ENCODE measurements at regions of chr10 and their contacts with region 1.

Region 1: DNA sequence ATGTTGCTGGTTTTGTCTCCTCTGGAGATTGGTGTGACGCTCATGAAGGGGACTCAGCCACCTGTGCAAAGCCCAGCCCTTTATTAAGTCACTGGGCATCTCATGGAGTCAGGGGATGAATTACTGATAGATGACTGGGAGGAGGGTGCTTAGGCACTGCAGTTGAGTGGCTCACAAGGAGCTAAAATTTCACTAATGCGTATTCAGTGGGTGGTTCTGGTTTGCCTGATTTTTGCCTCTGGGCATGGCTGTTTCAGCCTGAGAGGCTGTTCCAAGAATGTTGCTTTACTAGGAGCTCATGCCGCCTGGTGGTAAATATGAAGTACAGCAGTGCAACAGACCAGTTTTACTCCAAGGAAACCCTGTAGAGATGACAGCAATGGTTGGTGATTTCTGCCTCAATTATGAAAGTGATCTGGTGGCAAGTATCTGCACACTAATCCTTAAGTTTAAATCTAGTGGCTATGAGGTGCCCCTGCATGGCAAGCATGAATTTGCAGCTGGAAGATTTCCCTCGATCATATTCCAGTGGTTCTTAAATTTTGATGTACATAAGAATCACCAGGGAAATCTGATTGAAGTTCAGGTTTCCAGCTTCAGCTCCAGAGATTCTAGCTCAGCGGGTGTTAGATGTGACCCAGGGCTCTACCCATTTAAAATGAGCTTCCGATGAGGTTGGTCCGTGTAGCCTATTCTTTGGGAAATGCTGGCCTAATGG is 19.9 kb downstream of the ACTA2 start:
- DNase-seq: peak in 3 of 6 donors; percentile 28 to 48 (median 31)
- ATAC-seq: peak; percentile 46 to 87 (median 80)
- H3K4me3 ChIP-seq: no peak overlapping the region
- H3K27ac ChIP-seq: no peak overlapping the region
- H3K4me1 ChIP-seq: peaks cover 0 to 5% (median 4%) of the 10 kb centered on the region in 3 donors
- H3K27me3 ChIP-seq: no peaks in the 10 kb centered on the region
- CTCF ChIP-seq: peak; percentile 54 to 80 (median 68)

Region 2: DNA sequence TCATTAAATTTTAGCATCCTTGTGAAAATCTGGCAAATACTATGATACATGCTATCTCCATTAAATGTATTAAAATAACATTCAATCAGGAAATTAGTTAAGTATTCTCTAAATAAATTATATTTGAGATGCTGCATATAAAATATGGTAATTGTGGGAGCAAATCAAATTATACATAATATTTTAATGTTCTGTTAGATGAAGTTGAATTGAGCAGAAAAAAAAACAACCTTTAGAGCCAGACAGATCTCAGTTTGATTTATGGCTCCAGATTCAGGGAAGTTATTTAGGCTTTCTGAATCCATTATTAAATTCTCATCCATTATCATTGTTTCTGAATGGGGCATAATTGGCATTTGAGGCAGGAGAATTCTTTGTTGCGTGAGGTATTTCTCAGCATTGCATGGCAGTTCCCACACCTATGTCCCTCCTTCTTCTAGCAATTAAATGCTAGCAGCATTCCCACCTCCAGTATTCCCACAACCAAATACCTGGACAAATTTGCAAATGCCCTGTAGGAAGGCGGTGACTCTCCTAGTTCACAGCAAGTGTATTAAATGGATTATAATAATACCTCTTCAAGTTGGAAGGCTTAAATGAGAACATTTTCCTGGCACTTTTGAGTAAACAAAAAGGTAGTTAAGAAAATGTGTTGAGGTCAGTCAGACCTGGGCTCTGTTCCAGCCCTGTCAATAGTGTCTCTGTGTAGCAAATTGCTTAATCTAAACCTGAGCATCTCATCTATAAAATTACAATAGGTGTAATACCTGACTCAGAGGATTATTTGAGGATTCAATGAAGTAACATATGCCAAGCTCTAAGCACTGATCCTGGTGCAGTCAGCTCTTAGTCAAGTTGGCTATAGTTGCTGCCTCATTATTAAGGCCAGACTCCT is 458.5 kb before region 1 on chr10:
- intact Hi-C with region 1: no loop called
- DNase-seq: peak in 4 of 6 donors; percentile 49 to 61 (median 56)
- ATAC-seq: peak; percentile 84 to 95 (median 93)
- H3K4me3 ChIP-seq: no peak overlapping the region
- H3K27ac ChIP-seq: peak overlapping the region in 1 of 4 donors; percentile 14
- H3K4me1 ChIP-seq: peaks cover 0 to 14% (median 9%) of the 10 kb centered on the region in 3 donors
- H3K27me3 ChIP-seq: no peaks in the 10 kb centered on the region
- CTCF ChIP-seq: no peak

Region 3: GRCh38 chr10:88835096-88835909 is 97.4 kb before region 1 on chr10:
- intact Hi-C with region 1: loop called in 2 of 3 experiments (anchors 5 to 10 kb)
- DNase-seq: peak; percentile 74 to 88 (median 82)
- ATAC-seq: peak; percentile 87 to 96 (median 94)
- H3K4me3 ChIP-seq: no peak overlapping the region
- H3K27ac ChIP-seq: no peak overlapping the region
- H3K4me1 ChIP-seq: peaks cover under 1 to 18% (median 6%) of the 10 kb centered on the region in 3 donors
- H3K27me3 ChIP-seq: no peaks in the 10 kb centered on the region
- CTCF ChIP-seq: peak; percentile 69 to 78 (median 72)

Region 4: GRCh38 chr10:88986549-88987242 is 54.0 kb after region 1 on chr10:
- intact Hi-C with region 1: loop called in 2 of 3 experiments (anchors 5 kb)
- DNase-seq: peak in 2 of 6 donors; percentile 19 to 24
- ATAC-seq: no peak
- H3K4me3 ChIP-seq: no peak overlapping the region
- H3K27ac ChIP-seq: no peak overlapping the region
- H3K4me1 ChIP-seq: no peaks in the 10 kb centered on the region
- H3K27me3 ChIP-seq: no peaks in the 10 kb centered on the region
- CTCF ChIP-seq: peak; percentile 41 to 60 (median 60)

Region 5: GRCh38 chr10:89074120-89074519 is 141.4 kb after region 1 on chr10:
- intact Hi-C with region 1: no loop called
- DNase-seq: peak in 1 of 6 donors; percentile 17
- ATAC-seq: peak in 2 of 4 donors; percentile 62 to 76
- H3K4me3 ChIP-seq: no peak overlapping the region
- H3K27ac ChIP-seq: no peak overlapping the region
- H3K4me1 ChIP-seq: no peaks in the 10 kb centered on the region
- H3K27me3 ChIP-seq: no peaks in the 10 kb centered on the region
- CTCF ChIP-seq: no peak

Region 6: DNA sequence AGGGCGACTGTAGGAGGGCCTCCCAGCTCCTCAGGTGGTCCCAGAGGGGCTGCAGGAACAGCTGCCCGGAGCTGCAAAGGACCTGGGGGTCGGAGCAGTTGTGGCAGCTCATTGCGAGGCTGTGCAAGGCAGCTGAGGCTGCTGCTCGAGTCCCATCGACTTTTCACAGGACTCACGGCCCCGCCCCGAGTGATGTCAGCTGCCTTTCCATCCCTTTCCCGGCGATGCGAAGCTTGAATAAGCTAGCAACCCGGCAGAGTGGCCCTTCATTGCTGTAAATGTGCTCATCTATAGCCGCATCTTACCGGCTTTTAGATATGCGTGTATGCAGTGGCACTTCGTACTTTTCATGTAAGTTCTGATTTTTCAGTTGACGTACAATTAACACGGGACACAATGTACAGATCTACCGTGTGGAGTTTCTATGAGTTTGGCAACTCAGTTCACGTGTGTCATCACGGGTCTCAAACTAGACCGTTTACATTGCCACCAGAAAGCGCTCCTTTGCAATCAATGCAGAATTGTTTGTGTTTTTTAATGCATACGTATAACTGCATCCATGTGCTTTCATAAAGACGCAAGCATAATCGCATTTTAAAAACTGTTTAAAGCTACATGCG is 274.6 kb after region 1 on chr10 and contains the start of gene CH25H:
- intact Hi-C with region 1: loop called in 1 of 3 experiments (anchors 5 kb)
- DNase-seq: peak; percentile 34 to 75 (median 64)
- ATAC-seq: peak; percentile 71 to 90 (median 87)
- H3K4me3 ChIP-seq: peak within 1 kb of the TSS; percentile 8 to 47 (median 26)
- H3K27ac ChIP-seq: peak within 1 kb of the TSS in 3 of 4 donors; percentile 0 to 46 (median 8)
- H3K4me1 ChIP-seq: peaks cover 0 to 7% (median 6%) of the 10 kb centered on the region in 3 donors
- H3K27me3 ChIP-seq: peaks cover 0 to 29% (median 3%) of the 10 kb centered on the region in 4 donors
- CTCF ChIP-seq: no peak
- total RNA-seq, gene CH25H: 0.32 to 1.9 (median 0.46) TPM in 5 of 6 donors, not detected in the other

Measured in pancreas (tissue), 10 donors.